Ascending aorta (tissue), 2 donors: ENCODE measurements at regions of chr21 and their contacts with region 1.

Region 1: DNA sequence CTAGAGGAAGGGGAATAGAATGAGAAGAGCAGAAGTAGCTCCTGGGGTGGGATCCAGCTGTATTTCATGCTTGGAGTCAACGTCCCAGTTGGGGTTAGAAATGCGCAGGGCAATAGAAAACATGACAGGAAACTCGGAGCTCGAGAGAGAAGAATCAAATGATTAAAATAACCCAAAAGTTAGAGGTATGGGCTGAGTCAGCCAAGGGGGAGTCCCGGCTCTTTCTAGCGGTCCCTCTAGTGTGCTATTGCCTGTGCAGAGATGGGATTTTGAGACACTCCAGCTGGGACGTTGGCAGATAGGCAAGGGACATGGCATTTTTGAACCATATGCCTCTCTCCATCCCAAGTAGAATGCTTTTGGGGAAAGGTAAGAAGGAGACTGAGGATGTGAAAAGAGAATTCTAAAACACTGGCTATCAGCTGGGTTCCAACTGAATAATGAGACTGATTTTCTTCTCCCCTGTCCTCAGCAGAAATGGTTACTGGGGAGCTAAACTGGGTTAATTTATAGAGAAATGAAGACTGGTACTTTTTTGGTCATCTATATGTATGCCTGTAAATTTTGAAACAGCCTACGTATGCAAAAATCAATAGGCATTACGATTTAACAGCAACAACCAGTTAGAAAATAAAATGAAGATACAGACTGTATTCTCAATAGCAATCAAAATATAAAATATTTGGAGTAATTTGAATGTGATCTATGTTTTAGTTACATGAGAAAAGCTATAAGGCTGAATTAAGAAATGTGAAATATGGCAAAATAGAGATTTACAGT is 7.0 kb upstream of the VPS26C start:
- DNase-seq: no peak
- H3K4me3 ChIP-seq: no peak overlapping the region
- H3K27ac ChIP-seq: no peak overlapping the region
- H3K4me1 ChIP-seq: no peaks in the 10 kb centered on the region
- H3K27me3 ChIP-seq: no peaks in the 10 kb centered on the region
- CTCF ChIP-seq: no peak

Region 2: DNA sequence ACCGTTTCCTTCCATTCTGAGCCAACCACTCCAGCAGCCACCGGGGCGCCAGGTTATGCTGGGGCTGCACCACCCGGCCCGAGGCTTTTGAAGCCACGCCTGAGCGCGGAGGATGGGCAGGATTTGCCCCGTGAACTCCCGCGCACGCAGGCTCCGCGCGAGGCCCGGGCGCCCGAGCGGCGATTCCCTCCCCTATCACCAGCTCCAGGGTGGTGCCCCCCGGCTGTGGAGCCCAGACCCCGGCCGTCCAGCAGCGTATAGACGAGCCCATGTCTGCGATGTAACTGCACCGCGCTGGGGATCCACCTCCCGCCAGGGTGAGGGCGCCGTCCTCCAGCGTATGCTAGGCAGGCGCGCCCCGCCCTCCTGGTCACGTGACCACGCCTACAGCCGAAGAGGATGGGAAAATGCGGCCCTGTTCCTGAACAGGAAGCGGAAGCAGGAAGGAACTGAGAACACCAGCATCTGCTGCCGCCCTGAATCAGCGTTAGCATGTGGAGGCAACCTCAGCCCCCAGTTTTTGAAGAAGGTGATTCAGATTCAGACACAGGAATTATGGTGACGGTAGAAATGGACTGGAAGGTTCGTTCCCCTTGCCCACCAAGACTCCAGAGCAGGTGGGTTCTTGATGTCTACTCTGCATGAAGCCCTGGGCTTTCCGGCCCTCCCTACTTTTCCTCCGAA is 53.0 kb before region 1 on chr21:
- intact Hi-C with region 1: no loop called
- DNase-seq: peak; percentile 88 to 97
- H3K4me3 ChIP-seq: peak overlapping the region; percentile 54 to 68
- H3K27ac ChIP-seq: peak overlapping the region; percentile 55 to 72
- H3K4me1 ChIP-seq: peaks cover 0 to 6% of the 10 kb centered on the region in 2 donors
- H3K27me3 ChIP-seq: no peaks in the 10 kb centered on the region
- CTCF ChIP-seq: peak in 2 of 3 experiments; percentile 29 to 53

Region 3: GRCh38 chr21:37463083-37463801 is 189.1 kb after region 1 on chr21:
- intact Hi-C with region 1: loop called (anchors 5 kb)
- DNase-seq: no peak
- H3K4me3 ChIP-seq: peak overlapping the region in 1 of 2 donors; percentile 20
- H3K27ac ChIP-seq: peak overlapping the region in 1 of 2 donors; percentile 39
- H3K4me1 ChIP-seq: peaks cover 9 to 62% of the 10 kb centered on the region in 2 donors
- H3K27me3 ChIP-seq: no peaks in the 10 kb centered on the region
- CTCF ChIP-seq: peak; percentile 31 to 48 (median 44)